GM18951 (cell line): ENCODE measurements at regions of chr20 and their contacts with region 1.

Region 1: DNA sequence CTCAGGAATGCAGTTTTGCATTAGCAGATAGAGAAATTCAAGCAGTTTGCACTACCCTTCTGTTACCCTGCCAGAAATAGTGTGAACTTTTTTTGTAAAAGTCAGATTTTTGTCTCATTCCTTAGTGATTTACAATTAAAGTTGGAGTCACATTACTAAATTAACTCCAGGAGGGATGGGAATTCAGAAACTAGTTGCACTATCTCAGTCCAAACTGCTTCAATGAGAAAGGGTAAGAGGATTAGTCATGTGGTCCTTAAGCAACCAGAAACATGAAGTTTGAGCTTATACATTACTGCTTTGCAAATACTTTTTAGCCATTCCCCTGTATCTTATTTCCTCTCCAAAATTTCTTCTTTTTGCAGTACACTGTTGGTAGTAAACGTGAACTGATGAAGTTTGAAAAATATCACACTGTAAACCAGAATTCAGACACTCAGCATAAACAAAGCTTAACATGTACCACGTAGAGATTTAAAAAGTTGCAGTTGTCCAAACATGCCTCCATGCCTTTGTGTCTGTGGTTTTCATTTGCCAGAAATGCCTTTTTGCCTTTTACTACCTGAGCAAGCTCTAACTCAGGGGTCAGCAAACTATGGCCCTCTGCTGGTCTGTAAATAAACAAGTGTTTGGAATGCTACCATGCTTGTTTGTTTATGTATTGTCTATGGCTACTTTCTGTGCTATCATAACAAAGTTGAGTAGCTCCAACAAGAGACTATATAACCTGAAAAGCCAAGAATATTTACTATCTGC is 49.7 kb downstream of the TP53INP2 start:
- POLR2A ChIP-seq: no peak

Region 2: GRCh38 chr20:34096699-34097420 is 657.0 kb before region 1 on chr20:
- in situ Hi-C with region 1: no loop called
- POLR2A ChIP-seq: no peak

Region 3: GRCh38 chr20:34302723-34303528 is 451.0 kb before region 1 on chr20 and contains the start of gene AHCY:
- in situ Hi-C with region 1: loop called (anchors 25 kb)
- POLR2A ChIP-seq: peak; percentile 81